Activated CD4-positive, alpha-beta T cell treated with anti-CD3 and anti-CD28 coated beads for 36 hours (primary cell): ENCODE measurements at regions of chr1 and their contacts with region 1.

Region 1: DNA sequence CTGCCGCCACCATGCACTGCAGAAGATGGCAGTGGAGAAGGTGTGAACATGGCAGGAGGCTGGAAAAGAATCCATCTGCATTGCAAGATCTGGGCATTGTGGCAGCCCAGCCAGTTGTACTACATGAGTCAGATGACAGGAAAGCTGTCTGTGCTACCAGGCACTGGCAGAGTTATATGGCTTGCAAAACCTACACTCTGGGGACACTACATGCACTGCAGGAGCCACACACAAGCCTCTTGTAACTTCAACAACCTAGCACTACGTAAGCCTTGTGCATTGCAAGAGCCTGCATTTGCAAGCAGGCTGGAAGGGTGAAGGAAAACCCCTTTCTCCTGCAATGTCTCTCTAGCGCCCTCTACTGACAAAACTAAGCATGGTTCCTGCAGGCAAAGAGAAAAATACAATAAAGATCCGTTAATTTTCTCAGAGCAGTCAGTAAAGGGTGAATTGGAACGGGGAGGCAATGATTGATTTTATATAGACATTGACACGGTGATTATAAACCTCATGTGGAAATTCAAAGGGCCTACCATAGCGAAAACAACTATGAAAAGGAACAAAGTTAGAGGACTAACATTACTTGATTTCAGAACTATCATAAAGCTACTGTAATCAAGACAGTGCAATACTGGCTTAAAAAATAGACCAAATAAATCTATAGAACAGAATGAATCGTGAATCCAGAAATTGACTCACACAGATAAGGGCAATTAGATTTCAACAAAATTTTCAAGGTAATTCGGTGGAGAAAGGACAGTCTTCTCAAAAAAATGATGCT is 26.2 kb upstream of the DYNLT5 start:
- DNase-seq: peak; percentile 71
- ATAC-seq: peak; percentile 80
- H3K4me3 Mint-ChIP-seq: no peak overlapping the region
- H3K27ac Mint-ChIP-seq: no peak overlapping the region
- H3K4me1 Mint-ChIP-seq: peaks cover 20% of the 10 kb centered on the region
- H3K27me3 Mint-ChIP-seq: peaks cover 14% of the 10 kb centered on the region

Region 2: GRCh38 chr1:65958561-65959350 is 767.3 kb before region 1 on chr1:
- CTCF ChIA-PET with region 1: no interaction called
- POLR2A ChIA-PET with region 1: no interaction called
- intact Hi-C with region 1: loop called (anchors 5 kb)
- DNase-seq: peak; percentile 23
- ATAC-seq: peak; percentile 70
- H3K4me3 Mint-ChIP-seq: no peak overlapping the region
- H3K27ac Mint-ChIP-seq: no peak overlapping the region
- H3K4me1 Mint-ChIP-seq: no peaks in the 10 kb centered on the region
- H3K27me3 Mint-ChIP-seq: no peaks in the 10 kb centered on the region

Region 3: GRCh38 chr1:66503841-66504470 is 222.1 kb before region 1 on chr1:
- CTCF ChIA-PET with region 1: interaction called, 18 read pairs
- POLR2A ChIA-PET with region 1: no interaction called
- intact Hi-C with region 1: loop called in 1 of 2 experiments (anchors 2 kb)
- DNase-seq: peak; percentile 65
- ATAC-seq: no peak
- H3K4me3 Mint-ChIP-seq: no peak overlapping the region
- H3K27ac Mint-ChIP-seq: no peak overlapping the region
- H3K4me1 Mint-ChIP-seq: no peaks in the 10 kb centered on the region
- H3K27me3 Mint-ChIP-seq: peaks cover 14% of the 10 kb centered on the region

Region 4: DNA sequence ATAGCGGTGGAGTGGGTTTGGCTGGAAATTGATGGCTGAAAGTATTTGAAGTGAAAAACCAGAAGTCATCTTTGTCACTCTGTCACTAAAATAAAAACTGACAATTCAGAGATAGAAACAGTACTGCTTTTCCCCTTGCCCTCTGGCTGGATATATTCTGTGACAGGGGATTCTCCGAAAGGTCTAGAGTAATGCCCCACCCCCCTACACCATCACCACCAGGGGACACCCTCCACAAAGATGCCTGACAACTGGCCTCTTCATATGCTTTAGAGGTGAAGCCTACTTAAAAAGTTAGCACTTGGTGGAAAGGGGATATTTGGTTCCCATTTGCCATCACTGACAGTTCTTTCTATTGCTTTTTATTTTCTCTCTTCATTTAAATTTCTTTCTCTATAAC is 118.6 kb before region 1 on chr1:
- CTCF ChIA-PET with region 1: interaction called, 3 read pairs
- POLR2A ChIA-PET with region 1: no interaction called
- intact Hi-C with region 1: loop called (anchors 5 kb)
- DNase-seq: peak; percentile 25
- ATAC-seq: no peak
- H3K4me3 Mint-ChIP-seq: no peak overlapping the region
- H3K27ac Mint-ChIP-seq: no peak overlapping the region
- H3K4me1 Mint-ChIP-seq: no peaks in the 10 kb centered on the region
- H3K27me3 Mint-ChIP-seq: peaks cover 12% of the 10 kb centered on the region

Region 5: GRCh38 chr1:66711420-66711819 is 14.7 kb before region 1 on chr1:
- CTCF ChIA-PET with region 1: interaction called, 19 read pairs
- POLR2A ChIA-PET with region 1: no interaction called
- intact Hi-C with region 1: loop called in 1 of 2 experiments (anchors 2 kb)
- DNase-seq: no peak
- ATAC-seq: no peak
- H3K4me3 Mint-ChIP-seq: no peak overlapping the region
- H3K27ac Mint-ChIP-seq: no peak overlapping the region
- H3K4me1 Mint-ChIP-seq: no peaks in the 10 kb centered on the region
- H3K27me3 Mint-ChIP-seq: peaks cover 6% of the 10 kb centered on the region